Body of pancreas (tissue), 4 donors: ENCODE measurements at regions of chr16 and their contacts with region 1.

Region 1: DNA sequence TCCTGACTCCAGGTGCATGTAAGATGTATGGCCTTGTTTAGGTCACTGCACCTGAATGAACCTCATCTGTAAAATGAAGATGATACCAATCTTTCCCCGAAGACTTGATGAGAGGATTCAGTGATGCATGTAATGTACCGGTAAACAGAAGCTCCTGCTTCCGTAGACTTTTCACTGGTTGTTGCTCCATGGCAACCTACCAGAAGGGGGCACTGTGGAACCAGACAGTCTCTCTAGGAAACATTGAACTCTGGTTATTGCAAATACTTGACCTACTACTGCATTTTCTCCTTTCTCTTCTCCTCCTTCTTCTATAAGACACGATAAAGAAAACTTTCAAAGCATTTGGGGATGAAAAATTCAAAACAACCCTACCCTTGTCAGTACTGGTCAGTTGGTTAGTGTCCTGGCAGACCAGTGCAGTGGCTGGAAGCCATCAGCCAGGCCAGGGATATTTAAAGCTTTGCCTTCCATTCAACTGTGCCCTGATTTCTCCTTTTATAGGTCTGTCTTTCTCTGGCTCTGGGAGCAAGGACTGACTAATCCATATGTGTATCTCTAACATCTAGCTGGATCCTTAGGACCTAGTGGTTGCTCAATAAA is 667.4 kb upstream of the SALL1 start:
- DNase-seq: peak; percentile 58 to 82 (median 68)
- ATAC-seq: peak; percentile 56
- H3K4me3 ChIP-seq: no peak overlapping the region
- H3K27ac ChIP-seq: no peak overlapping the region
- H3K4me1 ChIP-seq: no peaks in the 10 kb centered on the region
- H3K27me3 ChIP-seq: no peaks in the 10 kb centered on the region
- CTCF ChIP-seq: peak; percentile 59 to 75 (median 71)
- POLR2A ChIP-seq: no peak

Region 2: GRCh38 chr16:51868630-51869029 is 50.2 kb after region 1 on chr16:
- intact Hi-C with region 1: no loop called
- DNase-seq: no peak
- ATAC-seq: no peak
- H3K4me3 ChIP-seq: no peak overlapping the region
- H3K27ac ChIP-seq: no peak overlapping the region
- H3K4me1 ChIP-seq: no peaks in the 10 kb centered on the region
- H3K27me3 ChIP-seq: no peaks in the 10 kb centered on the region
- CTCF ChIP-seq: no peak
- POLR2A ChIP-seq: no peak

Region 3: DNA sequence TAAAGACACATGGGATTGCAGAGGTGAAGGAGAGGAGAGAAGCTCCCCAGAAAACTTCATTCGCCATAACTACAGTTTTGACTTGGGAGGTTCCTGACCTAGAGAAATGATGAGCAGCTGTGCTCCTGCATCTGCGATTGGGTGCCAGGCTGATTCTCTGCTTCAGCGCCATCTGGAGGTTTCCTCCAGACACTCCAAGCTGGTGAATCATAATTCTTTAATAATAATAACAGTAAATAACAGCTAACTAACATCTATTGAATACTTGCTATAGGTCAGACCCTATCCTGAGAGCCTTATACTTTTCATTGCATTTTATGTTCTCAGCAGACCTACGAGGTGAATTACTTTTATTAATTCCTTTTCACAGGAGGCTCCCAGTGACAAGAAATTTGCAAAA is 152.7 kb after region 1 on chr16:
- intact Hi-C with region 1: loop called (anchors 10 kb)
- DNase-seq: peak in 2 of 4 donors; percentile 9 to 17
- ATAC-seq: no peak
- H3K4me3 ChIP-seq: no peak overlapping the region
- H3K27ac ChIP-seq: no peak overlapping the region
- H3K4me1 ChIP-seq: no peaks in the 10 kb centered on the region
- H3K27me3 ChIP-seq: no peaks in the 10 kb centered on the region
- CTCF ChIP-seq: peak in 5 of 7 experiments; percentile 13 to 28 (median 20)
- POLR2A ChIP-seq: no peak